Mucosa of descending colon (tissue), 3 donors: ENCODE measurements at regions of chr2 and their contacts with region 1.

Region 1: GRCh38 chr2:100242891-100243619 is 79.2 kb downstream of the LONRF2 start:
- DNase-seq: peak in 2 of 3 donors; percentile 75 to 77
- ATAC-seq: peak; percentile 69
- H3K4me3 ChIP-seq: no peak overlapping the region
- H3K4me1 ChIP-seq: no peaks in the 10 kb centered on the region
- CTCF ChIP-seq: no peak

Region 2: DNA sequence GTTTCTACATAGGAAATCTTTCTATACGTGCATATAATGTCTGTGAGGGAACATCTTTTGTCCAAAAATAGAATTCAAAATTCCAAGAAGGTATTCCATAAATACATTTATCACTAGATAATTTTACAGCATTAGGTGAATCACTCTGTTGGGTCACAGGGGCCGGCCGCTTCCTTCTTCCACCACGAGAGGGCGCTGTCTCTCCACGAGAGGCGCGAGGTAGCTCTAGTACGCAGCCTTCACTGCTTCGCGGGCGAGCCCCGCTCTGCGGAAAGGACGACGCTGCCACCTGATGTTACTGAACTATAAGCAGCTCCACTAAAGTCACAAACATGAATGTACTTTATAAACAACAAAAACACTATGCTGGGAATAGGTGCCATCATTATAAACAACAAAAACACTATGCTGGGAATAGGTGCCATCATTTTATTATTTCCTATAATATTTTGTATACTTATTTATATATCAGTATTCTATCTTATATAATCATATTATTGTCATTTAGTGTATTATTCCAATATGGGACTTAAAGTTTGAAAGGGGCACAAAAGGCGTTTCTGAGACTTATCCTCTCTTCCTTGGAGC is 683.9 kb before region 1 on chr2:
- intact Hi-C with region 1: loop called (anchors 5 to 10 kb)
- DNase-seq: peak; percentile 83 to 90 (median 85)
- ATAC-seq: peak; percentile 97
- H3K4me3 ChIP-seq: no peak overlapping the region
- H3K4me1 ChIP-seq: no peaks in the 10 kb centered on the region
- CTCF ChIP-seq: peak; percentile 98

Region 3: GRCh38 chr2:100365434-100365833 is 122.4 kb after region 1 on chr2:
- intact Hi-C with region 1: no loop called
- DNase-seq: peak in 1 of 3 donors; percentile 3
- ATAC-seq: no peak
- H3K4me3 ChIP-seq: no peak overlapping the region
- H3K4me1 ChIP-seq: no peaks in the 10 kb centered on the region
- CTCF ChIP-seq: no peak

Region 4: GRCh38 chr2:101057051-101057933 is 814.2 kb after region 1 on chr2:
- intact Hi-C with region 1: no loop called
- DNase-seq: no peak
- ATAC-seq: peak; percentile 49
- H3K4me3 ChIP-seq: no peak overlapping the region
- H3K4me1 ChIP-seq: no peaks in the 10 kb centered on the region
- CTCF ChIP-seq: no peak